CD14-positive monocyte (primary cell): ENCODE measurements at regions of chr3 and their contacts with region 1.

Region 1: GRCh38 chr3:187919048-187919447 is 173.8 kb upstream of the BCL6 start:
- DNase-seq: peak; percentile 73 to 91 (median 86)
- H3K4me3 ChIP-seq: peak overlapping the region in 2 of 3 experiments; percentile 25 to 69
- H3K4me3 Mint-ChIP-seq: peak overlapping the region; percentile 63 to 75
- H3K27ac ChIP-seq: peak overlapping the region; percentile 30 to 94
- H3K27ac Mint-ChIP-seq: peak overlapping the region; percentile 94 to 98 (median 95)
- H3K4me1 ChIP-seq: peaks cover 66 to 71% of the 10 kb centered on the region in 2 donors
- H3K4me1 Mint-ChIP-seq: peaks cover 73% of the 10 kb centered on the region
- H3K27me3 ChIP-seq: no peaks in the 10 kb centered on the region
- H3K27me3 Mint-ChIP-seq: no peaks in the 10 kb centered on the region
- CTCF ChIP-seq: no peak

Region 2: GRCh38 chr3:187858041-187858440 is 61.0 kb before region 1 on chr3:
- intact Hi-C with region 1: loop called in 1 of 2 experiments (anchors 5 kb)
- DNase-seq: no peak
- H3K4me3 ChIP-seq: no peak overlapping the region
- H3K4me3 Mint-ChIP-seq: no peak overlapping the region
- H3K27ac ChIP-seq: no peak overlapping the region
- H3K27ac Mint-ChIP-seq: no peak overlapping the region
- H3K4me1 ChIP-seq: peaks cover 10 to 25% of the 10 kb centered on the region in 2 donors
- H3K4me1 Mint-ChIP-seq: peaks cover 20% of the 10 kb centered on the region
- H3K27me3 ChIP-seq: no peaks in the 10 kb centered on the region
- H3K27me3 Mint-ChIP-seq: peaks cover 0 to 2% (median under 1%) of the 10 kb centered on the region in 3 donors
- CTCF ChIP-seq: no peak

Region 3: GRCh38 chr3:187878776-187879518 is 40.1 kb before region 1 on chr3:
- intact Hi-C with region 1: no loop called
- DNase-seq: no peak
- H3K4me3 ChIP-seq: no peak overlapping the region
- H3K4me3 Mint-ChIP-seq: no peak overlapping the region
- H3K27ac ChIP-seq: no peak overlapping the region
- H3K27ac Mint-ChIP-seq: no peak overlapping the region
- H3K4me1 ChIP-seq: peaks cover 6 to 12% of the 10 kb centered on the region in 2 donors
- H3K4me1 Mint-ChIP-seq: peaks cover 17% of the 10 kb centered on the region
- H3K27me3 ChIP-seq: no peaks in the 10 kb centered on the region
- H3K27me3 Mint-ChIP-seq: peaks cover 0 to 3% (median 2%) of the 10 kb centered on the region in 3 donors
- CTCF ChIP-seq: no peak

Region 4: GRCh38 chr3:187968883-187969580 is 50.0 kb after region 1 on chr3:
- intact Hi-C with region 1: loop called in 1 of 2 experiments (anchors 5 kb)
- DNase-seq: peak; percentile 81 to 95 (median 93)
- H3K4me3 ChIP-seq: no peak overlapping the region
- H3K4me3 Mint-ChIP-seq: no peak overlapping the region
- H3K27ac ChIP-seq: peak overlapping the region; percentile 64 to 78
- H3K27ac Mint-ChIP-seq: peak overlapping the region; percentile 62 to 98 (median 90)
- H3K4me1 ChIP-seq: peaks cover 57 to 59% of the 10 kb centered on the region in 2 donors
- H3K4me1 Mint-ChIP-seq: peaks cover 51% of the 10 kb centered on the region
- H3K27me3 ChIP-seq: no peaks in the 10 kb centered on the region
- H3K27me3 Mint-ChIP-seq: peaks cover 0 to 4% (median 0%) of the 10 kb centered on the region in 3 donors
- CTCF ChIP-seq: no peak

Region 5: DNA sequence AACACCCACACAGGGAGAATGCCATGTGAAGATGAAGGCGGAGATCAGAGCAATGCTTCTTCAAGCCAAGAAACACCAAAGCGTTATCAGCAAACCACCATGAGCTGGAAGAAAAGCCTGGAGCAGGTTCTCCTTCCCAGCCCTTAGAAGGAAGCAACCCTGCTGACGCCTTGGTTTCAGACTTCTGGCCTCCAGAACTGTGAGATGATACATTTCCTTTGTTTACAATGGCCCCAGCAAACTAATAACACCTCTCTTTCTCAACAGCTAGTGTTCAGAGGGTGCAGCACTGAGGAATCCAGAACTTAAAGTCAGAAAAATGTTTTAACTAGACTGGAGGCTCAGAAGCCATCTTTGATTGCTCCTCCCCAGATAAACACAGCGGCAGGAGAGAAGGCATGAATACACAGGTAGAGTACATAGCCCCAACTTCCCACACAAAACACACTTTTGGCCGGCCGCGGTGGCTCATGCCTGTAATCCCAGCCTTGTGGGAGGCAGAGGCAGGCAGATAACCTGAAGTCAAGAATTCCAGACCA is 102.5 kb after region 1 on chr3:
- intact Hi-C with region 1: no loop called
- DNase-seq: no peak
- H3K4me3 ChIP-seq: no peak overlapping the region
- H3K4me3 Mint-ChIP-seq: no peak overlapping the region
- H3K27ac ChIP-seq: no peak overlapping the region
- H3K27ac Mint-ChIP-seq: no peak overlapping the region
- H3K4me1 ChIP-seq: no peaks in the 10 kb centered on the region
- H3K4me1 Mint-ChIP-seq: peaks cover 3% of the 10 kb centered on the region
- H3K27me3 ChIP-seq: no peaks in the 10 kb centered on the region
- H3K27me3 Mint-ChIP-seq: peaks cover 0 to 3% (median 1%) of the 10 kb centered on the region in 3 donors
- CTCF ChIP-seq: no peak

Region 6: DNA sequence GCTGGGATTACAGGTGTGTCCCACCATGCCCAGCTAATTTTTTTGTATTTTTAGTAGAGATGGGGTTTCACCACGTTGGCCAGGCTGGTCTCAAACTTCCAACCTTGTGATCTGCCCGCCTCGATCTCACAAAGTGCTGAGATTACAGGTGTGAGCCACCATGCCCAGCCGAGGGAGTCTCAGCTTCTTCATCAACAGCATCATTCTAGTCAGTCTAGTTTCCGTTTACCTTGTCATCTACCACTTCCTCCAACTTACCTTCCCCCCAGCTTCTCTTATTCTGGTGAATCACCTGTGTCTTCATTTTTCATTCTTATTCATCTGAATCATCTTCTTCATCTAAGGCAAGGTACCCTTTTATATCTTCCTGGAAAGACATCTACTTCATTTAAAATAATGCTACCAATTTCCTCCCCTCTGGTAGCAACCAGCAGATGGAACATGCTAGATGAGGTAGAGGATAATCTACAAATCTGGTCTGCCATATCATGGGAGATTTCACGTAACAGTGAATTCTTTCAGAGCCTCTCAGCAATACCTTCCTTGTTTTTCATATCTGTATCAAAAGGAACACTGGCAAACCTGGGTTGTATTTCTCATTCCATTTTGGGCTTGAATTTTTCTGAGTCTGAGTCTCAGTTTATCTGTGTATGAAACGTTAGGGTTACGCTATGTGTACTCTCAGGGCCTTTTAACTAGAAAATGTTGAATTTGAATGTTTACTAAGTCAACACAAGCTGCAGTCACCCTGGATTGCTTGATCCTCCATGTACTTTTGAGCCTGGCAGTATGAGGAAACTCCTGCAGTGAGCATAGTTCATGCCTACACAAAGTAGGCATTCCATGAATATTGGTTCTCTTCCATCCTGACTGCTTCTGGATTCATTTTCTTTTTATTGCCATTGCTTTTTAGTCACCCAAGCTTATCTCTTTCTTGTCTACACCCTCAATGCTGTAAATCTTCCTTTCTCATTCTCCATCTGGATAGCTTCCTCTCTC is 251.7 kb after region 1 on chr3:
- intact Hi-C with region 1: no loop called
- DNase-seq: no peak
- H3K4me3 ChIP-seq: no peak overlapping the region
- H3K4me3 Mint-ChIP-seq: no peak overlapping the region
- H3K27ac ChIP-seq: no peak overlapping the region
- H3K27ac Mint-ChIP-seq: no peak overlapping the region
- H3K4me1 ChIP-seq: peaks cover 7 to 12% of the 10 kb centered on the region in 2 donors
- H3K4me1 Mint-ChIP-seq: peaks cover 10% of the 10 kb centered on the region
- H3K27me3 ChIP-seq: no peaks in the 10 kb centered on the region
- H3K27me3 Mint-ChIP-seq: no peaks in the 10 kb centered on the region
- CTCF ChIP-seq: no peak